GM23248 (cell line): ENCODE measurements at regions of chr3 and their contacts with region 1.

Region 1: DNA sequence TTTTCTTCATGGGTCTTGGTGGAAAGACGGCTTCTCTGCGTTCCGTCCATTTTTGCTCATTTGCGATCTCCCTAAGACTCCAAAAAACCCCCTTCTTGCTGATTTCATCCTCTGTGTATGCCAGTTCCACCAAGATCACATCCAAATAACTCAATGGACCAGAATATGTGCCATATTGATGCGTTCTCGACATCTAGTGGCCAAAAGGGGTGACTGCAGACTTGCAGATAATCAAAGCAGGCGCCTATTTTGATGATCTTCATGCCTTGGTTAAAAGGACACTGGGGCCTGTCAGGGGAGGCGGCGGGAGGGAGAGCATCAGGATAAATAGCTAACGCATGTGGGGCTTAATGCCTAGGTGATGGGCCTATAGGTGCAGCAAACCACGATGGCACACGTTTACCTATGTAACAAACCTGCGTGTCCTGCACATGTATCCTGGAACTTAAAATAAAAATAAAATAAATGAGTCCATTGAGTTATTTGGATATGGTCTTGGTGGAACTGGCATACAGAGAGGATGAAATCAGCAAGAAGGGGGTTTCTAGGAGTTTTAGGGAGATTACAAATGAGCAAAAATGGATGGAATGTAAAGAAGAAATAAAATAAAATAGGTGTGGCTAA is 104.2 kb upstream of the RAD18 start:
- DNase-seq: peak; percentile 80
- H3K4me3 ChIP-seq: no peak overlapping the region
- H3K27ac ChIP-seq: no peak overlapping the region
- H3K4me1 ChIP-seq: no peaks in the 10 kb centered on the region
- H3K27me3 ChIP-seq: no peaks in the 10 kb centered on the region

Region 2: DNA sequence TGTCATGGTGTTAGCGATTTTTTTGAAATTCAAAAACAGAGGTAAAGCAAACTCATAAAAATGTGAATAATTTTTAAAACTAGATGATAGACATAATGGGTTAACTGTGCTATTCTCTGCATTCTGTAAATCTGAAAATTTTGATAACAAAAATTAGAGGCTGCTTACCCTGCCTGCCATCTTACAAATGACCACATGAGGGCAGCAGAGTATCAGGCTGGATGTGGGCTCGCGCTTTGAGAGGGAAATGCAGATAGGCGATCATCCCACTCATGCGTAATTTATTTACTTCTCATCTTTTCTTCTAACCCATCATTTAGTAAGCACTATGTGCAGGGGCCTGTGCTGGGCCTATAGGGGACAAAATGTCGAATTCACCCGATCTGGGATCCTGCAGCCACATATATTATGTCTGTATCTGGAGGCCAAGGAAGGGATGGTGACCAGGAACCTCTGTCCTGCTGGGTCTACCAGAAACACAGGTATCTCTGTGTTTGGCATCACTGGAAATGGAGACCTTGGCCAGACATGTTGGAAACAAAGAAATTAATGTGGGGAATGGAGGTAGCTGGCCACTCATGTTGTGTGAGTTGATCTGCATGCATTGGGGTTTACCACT is 96.4 kb before region 1 on chr3:
- in situ Hi-C with region 1: loop called (anchors 5 kb)
- DNase-seq: peak; percentile 68
- H3K4me3 ChIP-seq: no peak overlapping the region
- H3K27ac ChIP-seq: no peak overlapping the region
- H3K4me1 ChIP-seq: no peaks in the 10 kb centered on the region
- H3K27me3 ChIP-seq: no peaks in the 10 kb centered on the region

Region 3: DNA sequence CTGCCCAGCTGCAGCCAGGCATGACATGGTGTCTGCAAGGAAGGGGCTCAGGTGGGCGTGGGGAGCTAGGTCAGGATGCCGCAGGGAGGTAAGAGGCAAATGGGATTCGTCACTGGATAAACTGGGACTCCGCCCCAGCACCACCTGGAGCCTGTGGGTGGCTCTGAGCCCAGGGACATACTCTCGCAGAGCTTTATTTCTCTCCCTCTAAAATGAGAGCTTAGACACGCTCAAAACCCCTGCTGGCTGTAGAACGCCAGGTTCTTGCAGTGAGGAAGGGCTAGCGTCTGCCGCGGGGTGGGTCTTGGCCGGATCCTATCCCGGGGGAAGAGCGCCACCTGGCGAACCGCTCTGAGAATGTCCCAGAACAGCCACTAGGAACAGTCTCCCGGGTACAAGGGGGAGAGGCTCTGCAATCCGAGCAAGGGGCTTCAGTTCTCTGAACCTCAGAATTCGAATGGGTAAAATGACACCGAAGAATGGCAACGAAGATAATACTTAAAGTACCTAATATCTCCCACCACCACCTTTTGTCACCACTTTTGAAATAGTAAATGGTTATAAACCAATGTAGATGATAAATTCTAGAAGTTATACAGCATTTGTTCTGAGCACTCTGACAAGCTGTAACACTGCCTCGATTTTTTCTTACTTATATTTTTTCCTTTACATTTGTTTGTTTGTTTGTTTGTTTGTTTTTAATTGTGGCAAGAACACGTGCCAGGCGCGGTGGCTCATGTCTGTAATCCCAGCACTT is 235.1 kb after region 1 on chr3:
- in situ Hi-C with region 1: no loop called
- DNase-seq: peak; percentile 84
- H3K4me3 ChIP-seq: peak overlapping the region; percentile 55
- H3K27ac ChIP-seq: no peak overlapping the region
- H3K4me1 ChIP-seq: peaks cover 8% of the 10 kb centered on the region
- H3K27me3 ChIP-seq: no peaks in the 10 kb centered on the region